Right cardiac atrium (tissue), 5 donors: ENCODE measurements at regions of chr16 and their contacts with region 1.

Region 1: GRCh38 chr16:31513126-31513525 is 4.9 kb upstream of the RUSF1 start:
- DNase-seq: no peak
- ATAC-seq: no peak
- H3K4me3 ChIP-seq: no peak overlapping the region
- H3K27ac ChIP-seq: no peak overlapping the region
- H3K4me1 ChIP-seq: no peaks in the 10 kb centered on the region
- H3K27me3 ChIP-seq: no peaks in the 10 kb centered on the region

Region 2: GRCh38 chr16:31873556-31874365 is 360.6 kb after region 1 on chr16 and contains the start of gene ZNF267:
- intact Hi-C with region 1: loop called in 1 of 4 experiments (anchors 10 kb)
- DNase-seq: peak; percentile 95 to 97 (median 96)
- ATAC-seq: peak; percentile 96 to 97
- H3K4me3 ChIP-seq: peak within 1 kb of the TSS; percentile 100
- H3K27ac ChIP-seq: peak within 1 kb of the TSS; percentile 96
- H3K4me1 ChIP-seq: peaks cover 8% of the 10 kb centered on the region
- H3K27me3 ChIP-seq: no peaks in the 10 kb centered on the region
- total RNA-seq, gene ZNF267: 6.4 to 9.9 (median 7.1) TPM